Mammary epithelial cell (primary cell): ENCODE measurements at regions of chr20 and their contacts with region 1.

Region 1: DNA sequence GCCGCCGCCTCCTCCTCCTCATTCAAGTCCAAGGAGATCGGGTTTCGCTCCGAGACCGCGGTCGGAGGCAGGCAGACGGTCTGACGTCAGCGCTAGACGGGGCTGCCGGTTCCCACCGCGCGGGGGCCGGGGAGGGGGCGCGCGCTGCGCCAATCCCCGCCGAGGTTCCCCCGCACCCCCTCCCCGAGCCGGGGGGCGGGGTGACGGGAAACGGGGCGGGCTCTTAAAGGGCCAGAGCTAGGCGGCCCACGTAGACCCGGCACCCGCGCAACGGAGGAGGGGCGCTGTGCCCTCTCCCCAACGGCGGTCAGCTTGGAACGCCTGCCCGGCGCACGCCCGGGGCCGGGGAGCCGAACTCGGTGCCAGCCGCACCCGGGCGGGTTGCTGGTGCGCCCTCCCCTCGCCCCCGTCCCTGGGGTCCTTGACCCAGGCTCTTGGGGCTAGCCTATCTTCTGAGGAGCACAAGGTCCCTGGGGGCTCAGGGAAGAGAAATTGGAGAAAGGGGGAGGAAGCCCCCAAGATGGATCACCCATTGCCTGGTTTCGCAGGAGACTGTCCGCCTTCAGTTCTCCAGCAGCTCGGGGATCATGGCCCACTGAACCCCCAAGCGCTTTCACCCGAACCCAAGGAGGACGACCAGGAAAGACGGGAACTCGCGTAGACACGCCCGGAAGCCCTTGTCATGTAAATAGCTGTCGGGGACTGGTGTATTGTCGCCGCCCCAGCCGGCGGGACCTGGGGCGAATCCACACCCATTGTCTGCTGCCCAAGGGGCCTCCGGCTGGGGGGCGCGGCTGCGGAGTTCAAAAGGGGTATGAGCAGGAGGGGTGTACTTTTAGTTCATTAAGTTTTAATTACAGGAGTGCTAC is at the start of gene PMEPA1:
- DNase-seq: peak; percentile 97
- H3K4me3 ChIP-seq: peak within 1 kb of the TSS; percentile 85 to 94 (median 92)
- H3K27ac ChIP-seq: peak within 1 kb of the TSS; percentile 91
- H3K4me1 ChIP-seq: peaks cover 54% of the 10 kb centered on the region
- H3K27me3 ChIP-seq: no peaks in the 10 kb centered on the region
- CTCF ChIP-seq: no peak
- total RNA-seq, gene PMEPA1: 100 to 108 TPM

Region 2: GRCh38 chr20:57609861-57610205 is 100.3 kb before region 1 on chr20:
- CTCF ChIA-PET with region 1: no interaction called
- dilution Hi-C with region 1: loop called (anchors 5 kb)
- in situ Hi-C with region 1: no loop called
- intact Hi-C with region 1: no loop called
- DNase-seq: no peak
- H3K4me3 ChIP-seq: no peak overlapping the region
- H3K27ac ChIP-seq: no peak overlapping the region
- H3K4me1 ChIP-seq: no peaks in the 10 kb centered on the region
- H3K27me3 ChIP-seq: peaks cover 7% of the 10 kb centered on the region
- CTCF ChIP-seq: no peak

Region 3: GRCh38 chr20:57693002-57693640 is 17.0 kb before region 1 on chr20:
- CTCF ChIA-PET with region 1: interaction called, 5 read pairs
- dilution Hi-C with region 1: no loop called
- in situ Hi-C with region 1: no loop called
- intact Hi-C with region 1: loop called (anchors 1 kb)
- DNase-seq: peak; percentile 99
- H3K4me3 ChIP-seq: no peak overlapping the region
- H3K27ac ChIP-seq: peak overlapping the region; percentile 88
- H3K4me1 ChIP-seq: peaks cover 93% of the 10 kb centered on the region
- H3K27me3 ChIP-seq: no peaks in the 10 kb centered on the region
- CTCF ChIP-seq: peak; percentile 49 to 69

Region 4: GRCh38 chr20:57698117-57698866 is 11.9 kb before region 1 on chr20:
- CTCF ChIA-PET with region 1: interaction called, 5 read pairs
- dilution Hi-C with region 1: no loop called
- in situ Hi-C with region 1: no loop called
- intact Hi-C with region 1: loop called (anchors 1 kb)
- DNase-seq: peak; percentile 99
- H3K4me3 ChIP-seq: peak overlapping the region in 1 of 3 experiments; percentile 24
- H3K27ac ChIP-seq: peak overlapping the region; percentile 90
- H3K4me1 ChIP-seq: peaks cover 92% of the 10 kb centered on the region
- H3K27me3 ChIP-seq: no peaks in the 10 kb centered on the region
- CTCF ChIP-seq: no peak

Region 5: GRCh38 chr20:58017237-58017969 is 307.2 kb after region 1 on chr20:
- CTCF ChIA-PET with region 1: no interaction called
- dilution Hi-C with region 1: no loop called
- in situ Hi-C with region 1: no loop called
- intact Hi-C with region 1: loop called (anchors 2 kb)
- DNase-seq: peak; percentile 95
- H3K4me3 ChIP-seq: peak overlapping the region in 1 of 3 experiments; percentile 2
- H3K27ac ChIP-seq: peak overlapping the region; percentile 91
- H3K4me1 ChIP-seq: peaks cover 42% of the 10 kb centered on the region
- H3K27me3 ChIP-seq: no peaks in the 10 kb centered on the region
- CTCF ChIP-seq: no peak